Sigmoid colon (tissue), 7 donors: ENCODE measurements at regions of chr14 and their contacts with region 1.

Region 1: DNA sequence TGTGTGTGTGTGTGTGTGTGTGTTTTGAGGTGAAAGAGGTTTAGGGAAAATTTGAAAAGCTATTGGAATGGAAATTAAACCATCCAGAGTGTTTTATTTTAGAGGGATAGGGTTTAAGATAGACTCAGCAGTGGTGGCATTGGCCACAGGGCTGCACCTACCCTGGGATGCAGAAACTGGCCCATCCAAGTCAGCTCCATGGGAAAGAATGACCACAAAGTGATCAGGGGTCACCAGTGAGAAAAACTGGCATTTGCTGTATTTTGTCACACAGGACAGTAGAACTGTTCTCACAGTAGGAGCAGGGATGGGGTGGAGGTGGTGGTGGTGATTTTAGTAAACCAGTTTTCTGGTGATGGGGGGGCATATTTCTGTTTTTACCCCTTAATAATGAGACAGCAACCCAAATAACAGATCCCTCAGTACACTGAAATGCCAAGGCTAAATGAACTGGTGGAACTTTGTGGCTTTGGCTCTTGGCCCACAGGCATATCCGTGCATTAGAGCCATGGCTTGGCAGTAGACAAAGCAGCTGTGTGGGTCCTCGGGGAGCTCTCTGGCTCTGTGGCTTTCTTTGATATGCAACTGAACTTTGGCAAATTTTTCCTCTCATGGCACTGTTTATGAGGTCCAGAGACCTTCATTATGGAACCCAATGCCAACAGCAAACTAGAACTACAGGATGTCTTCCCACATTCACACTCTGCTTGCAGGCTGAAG is 348.3 kb downstream of the ZFP36L1 start:
- DNase-seq: no peak
- H3K4me3 ChIP-seq: no peak overlapping the region
- H3K27ac ChIP-seq: peak overlapping the region in 2 of 4 donors; percentile 17 to 22
- H3K4me1 ChIP-seq: peaks cover 2 to 68% (median 43%) of the 10 kb centered on the region in 4 donors
- H3K27me3 ChIP-seq: no peaks in the 10 kb centered on the region
- CTCF ChIP-seq: no peak
- EP300 ChIP-seq: no peak
- POLR2A ChIP-seq: no peak

Region 2: GRCh38 chr14:68392393-68393141 is 52.0 kb before region 1 on chr14:
- intact Hi-C with region 1: loop called (anchors 5 kb)
- DNase-seq: peak; percentile 86
- H3K4me3 ChIP-seq: no peak overlapping the region
- H3K27ac ChIP-seq: peak overlapping the region; percentile 65 to 77 (median 75)
- H3K4me1 ChIP-seq: peaks cover 0 to 87% (median 64%) of the 10 kb centered on the region in 4 donors
- H3K27me3 ChIP-seq: no peaks in the 10 kb centered on the region
- CTCF ChIP-seq: no peak
- EP300 ChIP-seq: no peak
- POLR2A ChIP-seq: no peak